ENCODE measurements at regions of chr18 and their contacts with region 1.

Region 1: GRCh38 chr18:3585656-3586509 is 135.9 kb downstream of the TGIF1 start:
- DNase-seq: no peak
- ATAC-seq: peak; percentile 84
- H3K4me3 ChIP-seq: peak overlapping the region; percentile 28; the same call in 1 of the 2 replicates
- H3K27ac ChIP-seq: peak overlapping the region; percentile 75
- H3K4me1 ChIP-seq: peaks cover 30% of the 10 kb centered on the region
- H3K27me3 ChIP-seq: no peaks in the 10 kb centered on the region
- CTCF ChIP-seq: peak; percentile 70 to 76 (median 72)
- EP300 ChIP-seq: no peak; a peak in 1 of 4 replicates
- POLR2A ChIP-seq: no peak
- RAD21 ChIP-seq: peak; percentile 76

Region 2: DNA sequence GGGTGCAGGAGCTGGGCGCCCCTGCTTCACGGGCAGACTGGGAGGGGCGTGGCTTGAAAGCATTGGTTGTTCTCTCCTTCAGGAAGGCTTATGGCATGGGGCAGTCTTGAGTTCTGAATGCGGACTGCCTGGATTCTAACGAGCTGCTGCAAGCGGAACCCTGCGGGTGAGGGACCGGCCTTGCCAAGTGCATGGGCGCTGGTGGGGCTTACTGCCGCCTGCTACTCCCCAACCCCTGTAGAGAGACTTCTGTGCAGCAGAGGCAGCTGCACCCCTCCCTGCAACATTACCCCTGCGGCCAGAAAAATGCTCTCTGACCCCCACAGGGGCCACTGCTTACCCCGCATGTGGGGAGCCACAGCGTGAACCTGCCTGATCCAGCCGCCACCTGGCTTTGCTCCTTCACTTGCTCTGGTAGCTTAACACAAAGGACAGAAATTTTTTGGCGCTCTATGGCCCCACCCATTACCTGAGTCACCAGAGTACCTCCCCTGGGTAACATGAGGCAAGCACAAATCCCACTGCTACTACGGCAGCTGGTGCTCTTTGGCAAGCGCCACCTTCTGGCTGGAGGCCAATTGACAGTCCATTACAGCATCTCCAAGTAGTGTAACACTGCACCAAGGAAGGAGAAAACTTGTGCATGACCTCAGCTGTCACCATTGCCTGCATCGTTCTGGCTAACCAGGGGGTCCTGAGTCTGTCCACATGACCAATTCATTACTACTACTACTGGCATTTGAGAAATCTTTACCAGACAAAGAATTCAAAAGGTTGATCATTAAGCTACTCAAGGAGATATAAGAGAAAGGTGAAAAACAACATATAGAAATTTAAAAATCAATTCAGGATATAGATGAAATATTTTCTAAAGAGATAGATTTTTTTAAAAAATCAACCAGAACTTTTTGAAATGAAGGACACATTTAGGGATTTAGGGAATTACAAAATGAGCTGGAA is 288.6 kb before region 1 on chr18:
- CTCF ChIA-PET with region 1: interaction called, 4 read pairs
- POLR2A ChIA-PET with region 1: no interaction called
- RAD21 ChIA-PET with region 1: interaction called, 11 read pairs
- SMC1A ChIA-PET with region 1: interaction called, 5 read pairs
- in situ Hi-C with region 1: no loop called
- intact Hi-C with region 1: no loop called
- DNase-seq: peak; percentile 69
- ATAC-seq: peak; percentile 99
- H3K4me3 ChIP-seq: peak overlapping the region; percentile 71
- H3K27ac ChIP-seq: peak overlapping the region; percentile 33
- H3K4me1 ChIP-seq: peaks cover 5% of the 10 kb centered on the region; the same call in 1 of the 2 replicates
- H3K27me3 ChIP-seq: no peaks in the 10 kb centered on the region; a peak in 1 of 4 replicates
- CTCF ChIP-seq: peak; percentile 74 to 92 (median 77)
- EP300 ChIP-seq: no peak
- POLR2A ChIP-seq: peak; percentile 90
- RAD21 ChIP-seq: peak; percentile 41

Region 3: DNA sequence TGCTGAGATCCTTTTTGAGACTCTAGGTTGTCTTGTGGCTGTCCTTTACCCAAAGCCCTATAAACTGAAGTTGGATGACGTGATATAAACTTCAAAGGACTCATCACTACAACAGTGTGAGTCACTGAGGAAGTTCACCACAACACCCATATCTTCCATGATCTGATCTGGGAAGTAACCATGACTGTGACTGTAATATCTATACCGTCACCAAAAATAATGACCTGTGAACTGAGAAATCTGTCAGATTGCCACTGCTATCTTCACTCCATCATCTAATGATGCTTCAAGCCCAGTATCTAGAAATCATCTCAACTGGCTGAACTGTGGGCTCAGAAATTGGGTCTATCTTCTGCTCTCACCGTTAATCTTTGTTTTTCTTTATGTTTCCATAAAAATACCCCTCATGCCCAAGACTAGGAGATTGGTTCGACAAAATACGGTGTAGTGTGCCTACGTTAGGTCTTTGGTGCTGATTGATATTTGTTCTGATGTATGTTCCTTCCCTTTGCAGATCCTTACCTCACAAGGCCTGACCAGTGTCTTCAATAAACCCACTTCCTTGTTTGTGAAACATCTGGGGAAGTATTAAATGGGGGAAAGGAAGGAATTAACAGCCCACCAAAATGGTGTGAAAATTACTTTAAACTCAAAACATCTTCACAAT is 245.7 kb before region 1 on chr18:
- CTCF ChIA-PET with region 1: no interaction called
- POLR2A ChIA-PET with region 1: no interaction called
- RAD21 ChIA-PET with region 1: no interaction called
- SMC1A ChIA-PET with region 1: no interaction called
- in situ Hi-C with region 1: no loop called
- intact Hi-C with region 1: no loop called
- DNase-seq: no peak
- ATAC-seq: no peak
- H3K4me3 ChIP-seq: no peak overlapping the region
- H3K27ac ChIP-seq: no peak overlapping the region
- H3K4me1 ChIP-seq: no peaks in the 10 kb centered on the region
- H3K27me3 ChIP-seq: no peaks in the 10 kb centered on the region; a peak in 2 of 4 replicates
- CTCF ChIP-seq: no peak
- EP300 ChIP-seq: no peak
- POLR2A ChIP-seq: no peak
- RAD21 ChIP-seq: no peak

Region 4: DNA sequence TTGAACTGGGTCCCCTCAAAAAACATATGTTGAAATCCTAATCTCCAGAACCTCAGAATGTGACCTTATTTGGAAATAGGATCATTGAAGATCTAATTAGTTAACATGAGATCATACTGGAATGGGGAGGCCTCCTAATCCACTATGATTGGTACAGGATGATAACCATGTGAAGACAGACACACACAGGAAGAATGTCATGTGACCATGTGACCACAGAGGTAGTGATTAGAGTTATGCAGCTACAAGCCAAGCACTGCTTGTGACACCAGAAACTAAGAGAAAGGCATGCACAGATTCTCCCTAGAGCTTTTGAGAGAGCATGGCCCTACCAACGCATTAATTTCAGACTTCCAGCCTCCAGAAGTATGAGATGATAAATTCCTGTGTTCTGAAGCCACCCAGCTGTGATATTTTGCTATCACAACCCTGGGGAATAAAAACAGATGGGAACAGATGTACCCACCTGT is 182.9 kb before region 1 on chr18:
- CTCF ChIA-PET with region 1: interaction called, 5 read pairs
- POLR2A ChIA-PET with region 1: no interaction called
- RAD21 ChIA-PET with region 1: no interaction called
- SMC1A ChIA-PET with region 1: no interaction called
- in situ Hi-C with region 1: no loop called
- intact Hi-C with region 1: loop called (anchors 5 kb)
- DNase-seq: no peak
- ATAC-seq: peak; percentile 42
- H3K4me3 ChIP-seq: no peak overlapping the region
- H3K27ac ChIP-seq: no peak overlapping the region
- H3K4me1 ChIP-seq: peaks cover 36% of the 10 kb centered on the region
- H3K27me3 ChIP-seq: no peaks in the 10 kb centered on the region
- CTCF ChIP-seq: no peak
- EP300 ChIP-seq: no peak
- POLR2A ChIP-seq: no peak
- RAD21 ChIP-seq: no peak

Region 5: DNA sequence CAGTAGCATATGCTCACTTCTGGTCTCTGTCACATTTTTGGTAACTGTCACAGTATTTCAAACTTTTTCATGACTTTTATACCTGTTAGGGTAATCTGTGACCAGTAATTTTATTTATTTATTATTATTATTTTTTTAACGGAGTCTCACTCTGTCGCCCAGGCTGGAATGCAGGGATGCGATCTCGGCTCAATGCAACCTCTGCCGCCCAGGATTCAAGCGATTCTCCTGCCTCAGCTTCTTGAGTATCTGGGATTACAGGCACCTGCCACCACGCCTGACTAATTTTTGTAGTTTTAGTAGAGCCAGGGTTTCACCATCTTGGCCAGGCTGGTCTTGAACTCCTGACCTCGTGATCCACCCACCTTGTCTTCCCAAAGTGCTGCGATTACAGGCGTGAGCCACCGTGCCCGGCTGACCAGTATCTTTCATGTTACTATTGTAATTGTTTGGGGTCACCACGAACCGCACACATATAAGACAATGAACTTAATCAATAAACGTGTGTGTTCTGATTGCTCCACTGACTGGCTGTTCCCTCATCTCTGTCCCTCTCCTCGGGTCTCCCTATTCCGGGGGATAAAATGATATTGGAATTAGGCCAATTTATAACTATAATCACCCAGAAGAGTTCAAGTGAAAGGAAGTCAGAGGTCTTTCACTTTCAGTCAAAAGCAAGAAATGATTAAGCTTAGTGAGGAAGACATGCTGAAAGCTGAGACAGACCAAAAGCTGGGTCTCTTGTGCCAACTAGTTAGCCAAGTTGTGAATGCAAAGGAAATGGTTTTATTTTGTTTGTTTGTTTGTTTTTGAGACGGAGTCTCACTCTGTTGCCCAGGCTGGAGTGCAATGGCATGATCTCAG is 113.0 kb before region 1 on chr18:
- CTCF ChIA-PET with region 1: interaction called, 13 read pairs
- POLR2A ChIA-PET with region 1: interaction called, 3 read pairs
- RAD21 ChIA-PET with region 1: interaction called, 8 read pairs
- SMC1A ChIA-PET with region 1: interaction called, 3 read pairs
- in situ Hi-C with region 1: no loop called
- intact Hi-C with region 1: no loop called
- DNase-seq: no peak
- ATAC-seq: peak; percentile 96
- H3K4me3 ChIP-seq: no peak overlapping the region
- H3K27ac ChIP-seq: no peak overlapping the region
- H3K4me1 ChIP-seq: no peaks in the 10 kb centered on the region
- H3K27me3 ChIP-seq: no peaks in the 10 kb centered on the region
- CTCF ChIP-seq: no peak
- EP300 ChIP-seq: peak in 1 of 2 experiments; percentile 56; a peak in 1 of 4 replicates
- POLR2A ChIP-seq: no peak
- RAD21 ChIP-seq: no peak

Region 6: GRCh38 chr18:3511922-3512372 is 73.9 kb before region 1 on chr18:
- CTCF ChIA-PET with region 1: interaction called, 11 read pairs
- POLR2A ChIA-PET with region 1: no interaction called
- RAD21 ChIA-PET with region 1: interaction called, 3 read pairs
- SMC1A ChIA-PET with region 1: interaction called, 4 read pairs
- in situ Hi-C with region 1: no loop called
- intact Hi-C with region 1: no loop called
- DNase-seq: no peak
- ATAC-seq: peak; percentile 78
- H3K4me3 ChIP-seq: no peak overlapping the region
- H3K27ac ChIP-seq: no peak overlapping the region
- H3K4me1 ChIP-seq: peaks cover 9% of the 10 kb centered on the region
- H3K27me3 ChIP-seq: no peaks in the 10 kb centered on the region
- CTCF ChIP-seq: no peak
- EP300 ChIP-seq: no peak; a peak in 1 of 4 replicates
- POLR2A ChIP-seq: no peak
- RAD21 ChIP-seq: no peak

Measured in GM12878 (cell line).